ENCODE measurements at regions of chr4 and their contacts with region 1.

Region 1: DNA sequence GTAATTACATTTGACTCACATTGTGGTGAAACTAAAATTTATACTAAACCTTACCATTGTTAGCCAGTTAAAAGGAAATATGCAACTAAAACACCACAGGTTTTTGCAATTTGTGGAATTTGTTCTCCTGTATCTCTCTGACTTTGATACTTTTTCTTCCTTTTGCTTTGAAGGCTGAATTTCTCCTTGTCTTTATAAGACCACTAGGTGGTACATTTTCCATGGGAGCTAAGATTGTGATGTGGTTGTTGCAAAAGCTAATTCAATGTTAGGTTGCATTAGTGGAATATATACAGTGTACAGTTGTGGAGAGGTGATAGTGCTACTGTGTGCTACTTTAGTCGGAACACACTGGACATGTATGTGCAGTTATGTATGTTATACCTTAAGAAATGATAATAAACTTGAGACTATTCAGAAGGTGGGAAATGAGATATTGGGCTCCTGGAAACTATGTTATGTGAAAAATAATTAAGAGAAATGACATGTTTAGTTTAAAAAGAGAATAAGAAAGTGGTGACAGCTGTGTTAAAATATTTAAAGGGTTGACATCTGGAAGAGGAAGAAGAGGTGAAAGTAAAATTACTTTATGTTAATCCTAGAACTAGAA is 70.3 kb downstream of the ARL9 start:
- DNase-seq: peak; percentile 8
- H3K4me3 ChIP-seq: no peak overlapping the region
- H3K27ac ChIP-seq: no peak overlapping the region
- H3K4me1 ChIP-seq: no peaks in the 10 kb centered on the region
- H3K27me3 ChIP-seq: peaks cover 8% of the 10 kb centered on the region
- CTCF ChIP-seq: peak; percentile 50 to 60

Region 2: GRCh38 chr4:56348576-56348975 is 227.3 kb before region 1 on chr4:
- CTCF ChIA-PET with region 1: no interaction called
- dilution Hi-C with region 1: no loop called
- in situ Hi-C with region 1: no loop called
- intact Hi-C with region 1: no loop called
- DNase-seq: no peak
- H3K4me3 ChIP-seq: no peak overlapping the region
- H3K27ac ChIP-seq: no peak overlapping the region
- H3K4me1 ChIP-seq: no peaks in the 10 kb centered on the region
- H3K27me3 ChIP-seq: no peaks in the 10 kb centered on the region
- CTCF ChIP-seq: no peak

Region 3: GRCh38 chr4:56655209-56655626 is 79.3 kb after region 1 on chr4:
- CTCF ChIA-PET with region 1: no interaction called
- dilution Hi-C with region 1: no loop called
- in situ Hi-C with region 1: no loop called
- intact Hi-C with region 1: loop called (anchors 2 kb)
- DNase-seq: no peak
- H3K4me3 ChIP-seq: peak overlapping the region; percentile 28 to 55 (median 55)
- H3K27ac ChIP-seq: no peak overlapping the region
- H3K4me1 ChIP-seq: peaks cover 25% of the 10 kb centered on the region
- H3K27me3 ChIP-seq: peaks cover 33% of the 10 kb centered on the region
- CTCF ChIP-seq: no peak

Region 4: DNA sequence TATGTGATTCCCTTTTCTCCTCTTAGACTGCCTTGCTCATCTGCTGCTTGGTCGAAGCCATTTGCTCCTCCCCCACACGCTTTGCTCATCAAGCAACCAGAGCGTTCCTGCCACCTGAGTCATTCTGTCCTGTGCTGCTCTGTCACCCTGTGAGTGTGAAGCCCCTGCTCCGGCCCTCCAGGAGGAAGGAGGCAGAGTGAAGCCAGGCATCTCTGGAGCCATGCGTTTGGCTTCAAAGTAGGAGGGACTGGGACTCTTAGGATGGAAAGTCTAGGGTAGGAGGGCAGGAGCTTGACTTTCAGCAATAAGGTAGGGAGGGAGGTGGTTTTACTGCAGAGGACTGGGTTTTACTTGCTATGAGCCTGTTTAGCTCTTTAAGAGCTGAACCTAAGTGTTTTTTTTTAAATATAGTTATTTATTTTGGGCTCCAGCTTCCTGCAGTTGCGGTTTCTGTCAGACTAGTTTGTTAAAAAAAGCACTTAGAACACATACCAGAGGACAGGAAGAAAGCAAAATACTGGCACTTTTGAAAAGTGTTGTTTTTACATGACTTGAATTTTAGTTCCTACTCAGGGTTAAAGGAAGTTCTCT is 182.0 kb after region 1 on chr4:
- CTCF ChIA-PET with region 1: no interaction called
- dilution Hi-C with region 1: no loop called
- in situ Hi-C with region 1: loop called in 1 of 2 experiments (anchors 25 kb)
- intact Hi-C with region 1: no loop called
- DNase-seq: no peak
- H3K4me3 ChIP-seq: no peak overlapping the region
- H3K27ac ChIP-seq: no peak overlapping the region
- H3K4me1 ChIP-seq: peaks cover 3% of the 10 kb centered on the region
- H3K27me3 ChIP-seq: no peaks in the 10 kb centered on the region
- CTCF ChIP-seq: no peak

Region 5: GRCh38 chr4:56786955-56787354 is 211.0 kb after region 1 on chr4:
- CTCF ChIA-PET with region 1: interaction called, 3 read pairs
- dilution Hi-C with region 1: no loop called
- in situ Hi-C with region 1: loop called in 1 of 2 experiments (anchors 10 kb)
- intact Hi-C with region 1: no loop called
- DNase-seq: peak; percentile 50
- H3K4me3 ChIP-seq: no peak overlapping the region
- H3K27ac ChIP-seq: no peak overlapping the region
- H3K4me1 ChIP-seq: no peaks in the 10 kb centered on the region
- H3K27me3 ChIP-seq: peaks cover 2% of the 10 kb centered on the region
- CTCF ChIP-seq: no peak